AG04449 (cell line): ENCODE measurements at regions of chr4 and their contacts with region 1.

Region 1: DNA sequence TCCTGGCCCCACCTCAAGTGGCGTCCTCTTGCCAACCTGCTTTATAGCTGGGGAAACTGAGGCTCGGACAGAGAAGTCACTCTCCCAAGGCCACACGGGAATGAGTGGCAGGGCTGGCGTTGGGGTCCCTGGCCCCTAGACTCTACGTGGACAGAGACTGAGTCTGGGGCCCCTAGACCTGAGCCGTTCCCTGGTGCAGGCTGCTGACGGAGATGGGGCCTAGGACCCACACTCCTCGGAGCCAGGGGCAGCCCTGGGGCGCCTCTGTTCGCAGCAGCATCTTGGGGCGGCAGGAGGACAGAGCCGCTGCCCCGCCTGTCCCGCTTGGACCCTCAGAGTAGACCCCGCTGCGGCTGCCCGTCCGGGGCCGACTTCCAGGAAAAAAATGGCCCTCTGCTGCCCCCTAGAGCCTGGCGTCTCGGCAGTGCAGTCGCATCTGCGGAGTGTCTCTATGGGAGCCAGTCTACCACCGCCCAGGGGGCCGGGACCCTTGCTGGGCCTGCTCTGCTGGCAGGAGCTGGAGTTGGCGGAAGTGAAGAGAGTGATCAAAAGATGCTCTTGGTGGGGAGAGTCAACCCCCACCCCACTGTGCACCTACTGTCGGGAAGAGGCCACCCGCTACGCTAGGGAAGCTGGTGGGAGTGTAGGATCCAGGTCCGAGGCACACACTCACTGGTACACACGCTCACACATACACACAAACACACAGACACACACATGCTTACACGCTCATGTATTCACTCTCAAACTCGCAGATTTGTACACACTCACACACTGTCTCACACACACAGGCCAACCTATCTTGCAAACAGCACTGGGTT is 220.1 kb downstream of the AFAP1 start:
- DNase-seq: no peak
- H3K4me3 ChIP-seq: no peak overlapping the region
- CTCF ChIP-seq: peak; percentile 88

Region 2: GRCh38 chr4:7462509-7462971 is 257.0 kb before region 1 on chr4:
- CTCF ChIA-PET with region 1: interaction called, 14 read pairs
- POLR2A ChIA-PET with region 1: no interaction called
- DNase-seq: no peak
- H3K4me3 ChIP-seq: no peak overlapping the region
- CTCF ChIP-seq: no peak

Region 3: GRCh38 chr4:7564242-7564641 is 155.3 kb before region 1 on chr4:
- CTCF ChIA-PET with region 1: no interaction called
- POLR2A ChIA-PET with region 1: no interaction called
- DNase-seq: no peak
- H3K4me3 ChIP-seq: no peak overlapping the region
- CTCF ChIP-seq: no peak

Region 4: DNA sequence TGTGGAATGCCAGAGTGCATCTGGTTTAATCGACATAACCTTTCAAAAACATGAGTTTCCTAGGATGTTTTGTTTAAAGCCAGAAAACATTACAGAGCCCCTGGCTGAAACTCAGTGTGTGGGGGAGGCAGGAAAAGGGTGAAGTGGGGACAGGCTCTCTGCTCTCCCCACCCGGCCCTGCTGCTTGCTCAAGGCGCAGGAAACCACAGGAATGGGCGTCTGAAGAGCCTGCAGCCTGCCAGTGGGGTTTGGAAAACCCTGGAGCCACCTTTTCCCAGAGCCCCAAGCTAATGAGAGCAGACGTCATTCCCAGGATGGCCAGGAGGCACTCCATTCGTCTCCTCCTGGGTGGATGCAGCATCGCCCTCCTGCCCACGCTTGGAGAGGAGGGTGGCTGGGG is 20.5 kb before region 1 on chr4:
- CTCF ChIA-PET with region 1: interaction called, 13 read pairs
- POLR2A ChIA-PET with region 1: no interaction called
- DNase-seq: peak; percentile 70
- H3K4me3 ChIP-seq: no peak overlapping the region
- CTCF ChIP-seq: no peak

Region 5: DNA sequence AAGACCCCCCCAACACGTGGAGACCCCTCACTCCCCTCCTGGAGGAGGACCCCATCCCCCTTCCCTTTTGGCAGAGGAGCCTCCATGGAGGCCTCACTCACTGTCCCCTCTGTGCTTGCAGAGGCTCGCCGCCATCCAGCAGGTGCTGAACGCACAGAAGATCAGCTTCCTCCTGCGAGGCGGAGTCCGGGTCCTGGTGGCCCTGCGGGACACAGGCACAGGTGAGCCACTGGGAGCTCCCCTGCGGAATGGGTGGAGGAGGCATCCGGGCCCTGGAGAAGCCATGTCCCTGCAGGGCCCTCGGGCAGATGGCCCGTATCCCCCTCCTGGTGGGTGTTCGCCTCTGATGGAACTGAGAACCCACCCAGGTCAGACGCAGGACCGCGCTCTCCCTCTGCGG is 13.6 kb after region 1 on chr4:
- CTCF ChIA-PET with region 1: interaction called, 13 read pairs
- POLR2A ChIA-PET with region 1: no interaction called
- DNase-seq: no peak
- H3K4me3 ChIP-seq: no peak overlapping the region
- CTCF ChIP-seq: no peak